ENCODE measurements at regions of chr4 and their contacts with region 1.

Region 1: GRCh38 chr4:153750197-153750817 is 9.5 kb downstream of the RNF175 start:
- DNase-seq: peak; percentile 72
- H3K4me3 ChIP-seq: no peak overlapping the region
- H3K27ac ChIP-seq: no peak overlapping the region
- H3K4me1 ChIP-seq: peaks cover 6 to 13% of the 10 kb centered on the region in 2 experiments; a peak in 3 of 4 replicates
- H3K27me3 ChIP-seq: no peaks in the 10 kb centered on the region
- CTCF ChIP-seq: peak; percentile 87
- EP300 ChIP-seq: no peak
- RAD21 ChIP-seq: peak; percentile 94

Region 2: DNA sequence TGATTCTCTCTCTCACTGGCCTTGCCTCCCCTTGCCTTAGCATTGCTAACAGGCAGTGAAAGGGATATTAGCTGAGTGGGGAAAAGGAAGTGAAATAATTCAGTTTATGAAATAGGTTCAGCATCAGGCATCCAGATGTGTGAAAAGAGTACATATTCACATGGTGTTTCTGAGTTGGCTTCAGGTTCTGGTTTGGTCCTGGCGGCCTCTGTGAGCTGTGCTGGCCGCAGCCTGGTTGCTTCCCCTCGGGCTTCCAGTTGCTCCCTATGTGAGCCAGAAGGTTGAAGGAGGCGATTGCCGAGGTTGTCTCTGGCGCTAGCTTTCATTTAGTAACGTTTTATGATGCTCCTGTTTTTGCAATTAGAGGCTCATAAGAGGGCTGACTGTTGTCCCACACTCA is 165.3 kb before region 1 on chr4:
- CTCF ChIA-PET with region 1: interaction called, 20 read pairs
- POLR2A ChIA-PET with region 1: no interaction called
- DNase-seq: peak; percentile 58
- H3K4me3 ChIP-seq: no peak overlapping the region
- H3K27ac ChIP-seq: peak overlapping the region in 1 of 2 experiments; percentile 79; a peak in 2 of 4 replicates
- H3K4me1 ChIP-seq: peaks cover 0 to 6% of the 10 kb centered on the region in 2 experiments; a peak in 2 of 4 replicates
- H3K27me3 ChIP-seq: no peaks in the 10 kb centered on the region
- CTCF ChIP-seq: no peak
- EP300 ChIP-seq: no peak
- RAD21 ChIP-seq: no peak

Region 3: DNA sequence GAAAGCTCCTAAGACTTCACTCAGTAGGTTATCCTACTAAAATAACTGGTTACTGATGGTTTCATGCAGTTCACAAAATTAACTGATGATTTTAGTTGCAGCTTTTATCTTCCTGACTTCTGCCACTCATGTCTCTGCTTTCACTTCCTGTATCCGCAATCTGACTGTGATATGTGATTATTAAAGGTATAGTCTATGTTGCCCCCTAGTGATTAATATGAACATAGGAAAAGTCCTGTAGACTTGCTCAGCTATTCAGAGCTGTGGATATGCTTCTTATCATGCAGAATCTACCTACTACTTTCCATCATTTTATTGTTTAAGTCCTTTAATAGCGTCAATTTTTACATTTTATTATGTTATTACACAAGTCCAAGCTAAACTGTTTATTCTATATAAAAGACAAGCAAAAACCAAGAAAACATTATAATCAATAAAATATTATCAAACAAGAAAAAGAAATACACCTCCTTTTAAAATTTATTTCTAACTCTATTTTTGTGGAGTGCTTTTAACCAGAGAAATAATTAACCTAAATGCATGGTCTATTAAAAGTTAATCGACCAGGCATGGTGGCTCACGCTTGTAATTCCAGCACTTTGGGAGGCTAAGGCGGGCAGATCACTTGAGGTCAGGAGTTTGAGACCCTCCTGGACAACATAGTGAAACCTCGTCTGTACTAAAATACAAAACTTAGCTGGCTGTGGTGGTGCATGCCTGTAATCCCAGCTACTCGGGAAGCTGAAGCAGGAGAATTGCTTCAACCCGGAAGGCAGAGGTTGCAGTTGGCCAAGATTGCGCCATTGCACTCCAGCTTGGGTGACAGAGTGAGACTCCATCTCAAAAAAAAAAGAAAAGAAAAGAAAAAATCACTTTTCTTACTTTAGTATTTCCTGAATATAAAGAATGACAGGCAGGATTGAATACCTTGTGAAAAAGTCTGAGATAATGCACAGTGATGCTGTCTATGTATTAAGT is 106.6 kb before region 1 on chr4:
- CTCF ChIA-PET with region 1: interaction called, 46 read pairs
- POLR2A ChIA-PET with region 1: no interaction called
- DNase-seq: peak; percentile 69
- H3K4me3 ChIP-seq: no peak overlapping the region
- H3K27ac ChIP-seq: no peak overlapping the region
- H3K4me1 ChIP-seq: no peaks in the 10 kb centered on the region; a peak in 1 of 4 replicates
- H3K27me3 ChIP-seq: no peaks in the 10 kb centered on the region
- CTCF ChIP-seq: peak; percentile 67
- EP300 ChIP-seq: no peak
- RAD21 ChIP-seq: peak; percentile 75

Region 4: GRCh38 chr4:153684182-153684970 is 65.9 kb before region 1 on chr4 and contains the start of gene TLR2:
- CTCF ChIA-PET with region 1: interaction called, 21 read pairs
- POLR2A ChIA-PET with region 1: no interaction called
- DNase-seq: peak; percentile 73
- H3K4me3 ChIP-seq: peak within 1 kb of the TSS; percentile 46 to 55
- H3K27ac ChIP-seq: no peak within 1 kb of the TSS
- H3K4me1 ChIP-seq: peaks cover 0 to 12% of the 10 kb centered on the region in 2 experiments; a peak in 1 of 4 replicates
- H3K27me3 ChIP-seq: peaks cover 34% of the 10 kb centered on the region
- CTCF ChIP-seq: no peak
- EP300 ChIP-seq: no peak
- RAD21 ChIP-seq: no peak
- polyA plus RNA-seq, gene TLR2: 0.18 and 0.21 TPM in 2 replicates

Region 5: GRCh38 chr4:153731239-153731638 is 19.1 kb before region 1 on chr4:
- CTCF ChIA-PET with region 1: interaction called, 15 read pairs
- POLR2A ChIA-PET with region 1: no interaction called
- DNase-seq: peak; percentile 90
- H3K4me3 ChIP-seq: no peak overlapping the region
- H3K27ac ChIP-seq: peak overlapping the region; percentile 60 to 67
- H3K4me1 ChIP-seq: peaks cover 6 to 9% of the 10 kb centered on the region in 2 experiments; a peak in 3 of 4 replicates
- H3K27me3 ChIP-seq: no peaks in the 10 kb centered on the region
- CTCF ChIP-seq: no peak
- EP300 ChIP-seq: peak; percentile 84 to 95; a peak in 3 of 4 replicates
- RAD21 ChIP-seq: no peak

Measured in SK-N-SH (cell line).